ENCODE measurements at regions of chr10 and their contacts with region 1.

Region 1: GRCh38 chr10:70758757-70759514 is 26.2 kb downstream of the TBATA start:
- DNase-seq: peak; percentile 34 to 81 (median 55)
- ATAC-seq: peak; percentile 54
- H3K4me3 ChIP-seq: no peak overlapping the region
- H3K4me3 Mint-ChIP-seq: no peak overlapping the region
- H3K27ac ChIP-seq: no peak overlapping the region
- H3K27ac Mint-ChIP-seq: no peak overlapping the region
- H3K4me1 ChIP-seq: peaks cover 5% of the 10 kb centered on the region
- H3K4me1 Mint-ChIP-seq: no peaks in the 10 kb centered on the region
- H3K27me3 ChIP-seq: no peaks in the 10 kb centered on the region
- H3K27me3 Mint-ChIP-seq: no peaks in the 10 kb centered on the region
- CTCF ChIP-seq: peak; percentile 79

Region 2: DNA sequence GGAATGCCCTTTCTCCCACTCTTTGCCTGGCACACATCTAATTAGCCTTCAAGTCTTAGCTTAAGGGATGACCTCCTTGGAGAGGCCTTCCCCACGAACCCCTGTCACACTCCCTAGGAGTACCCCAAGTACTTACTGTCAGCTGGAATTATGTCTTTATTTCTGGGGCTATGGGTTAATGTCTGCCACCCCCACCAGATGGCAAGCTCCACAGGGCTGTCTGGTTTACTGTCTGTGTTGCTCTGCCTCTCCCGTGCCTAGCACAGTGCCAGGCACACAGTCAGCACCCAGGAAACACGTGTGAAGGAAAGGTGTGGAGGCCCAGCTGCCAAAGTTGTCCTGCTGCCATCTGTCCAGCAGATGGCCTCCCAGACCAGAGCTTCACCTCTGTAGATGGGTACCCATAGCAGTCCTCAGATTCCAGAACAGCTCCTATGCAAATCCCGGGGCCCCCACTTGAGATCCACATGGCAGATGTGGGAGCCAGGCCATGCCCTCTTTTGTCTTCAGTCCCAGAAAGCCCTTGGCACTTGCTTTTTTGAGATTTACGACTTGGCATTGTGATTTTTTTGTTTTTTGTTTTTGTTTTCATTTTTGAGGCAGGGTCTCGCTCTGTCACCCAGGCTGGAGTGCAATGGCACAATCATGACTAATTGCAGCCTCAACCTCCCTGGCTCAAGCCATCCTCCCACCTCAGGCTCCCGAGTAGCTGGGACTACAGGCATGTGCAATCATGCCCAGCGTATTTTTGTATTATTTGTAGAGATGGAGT is 297.5 kb before region 1 on chr10:
- CTCF ChIA-PET with region 1: interaction called, 5 read pairs
- POLR2A ChIA-PET with region 1: no interaction called
- intact Hi-C with region 1: loop called (anchors 1 kb)
- DNase-seq: peak in 13 of 14 experiments; percentile 30 to 72 (median 39)
- ATAC-seq: peak; percentile 75
- H3K4me3 ChIP-seq: no peak overlapping the region
- H3K4me3 Mint-ChIP-seq: no peak overlapping the region
- H3K27ac ChIP-seq: no peak overlapping the region
- H3K27ac Mint-ChIP-seq: no peak overlapping the region
- H3K4me1 ChIP-seq: peaks cover 12% of the 10 kb centered on the region
- H3K4me1 Mint-ChIP-seq: peaks cover 4% of the 10 kb centered on the region
- H3K27me3 ChIP-seq: peaks cover 16 to 34% of the 10 kb centered on the region in 2 experiments
- H3K27me3 Mint-ChIP-seq: peaks cover 44% of the 10 kb centered on the region
- CTCF ChIP-seq: peak; percentile 87

Region 3: GRCh38 chr10:70558871-70559810 is 199.8 kb before region 1 on chr10:
- CTCF ChIA-PET with region 1: no interaction called
- POLR2A ChIA-PET with region 1: no interaction called
- intact Hi-C with region 1: loop called in 1 of 2 experiments (anchors 1 kb)
- DNase-seq: peak; percentile 38 to 75 (median 58)
- ATAC-seq: peak; percentile 95
- H3K4me3 ChIP-seq: peak overlapping the region; percentile 52
- H3K4me3 Mint-ChIP-seq: peak overlapping the region; percentile 64
- H3K27ac ChIP-seq: no peak overlapping the region
- H3K27ac Mint-ChIP-seq: no peak overlapping the region
- H3K4me1 ChIP-seq: peaks cover 9% of the 10 kb centered on the region
- H3K4me1 Mint-ChIP-seq: peaks cover 9% of the 10 kb centered on the region
- H3K27me3 ChIP-seq: no peaks in the 10 kb centered on the region
- H3K27me3 Mint-ChIP-seq: no peaks in the 10 kb centered on the region
- CTCF ChIP-seq: peak; percentile 53

Region 4: GRCh38 chr10:70745555-70745954 is 13.4 kb before region 1 on chr10:
- CTCF ChIA-PET with region 1: no interaction called
- POLR2A ChIA-PET with region 1: no interaction called
- intact Hi-C with region 1: no loop called
- DNase-seq: no peak
- ATAC-seq: no peak
- H3K4me3 ChIP-seq: no peak overlapping the region
- H3K4me3 Mint-ChIP-seq: no peak overlapping the region
- H3K27ac ChIP-seq: no peak overlapping the region
- H3K27ac Mint-ChIP-seq: no peak overlapping the region
- H3K4me1 ChIP-seq: no peaks in the 10 kb centered on the region
- H3K4me1 Mint-ChIP-seq: no peaks in the 10 kb centered on the region
- H3K27me3 ChIP-seq: no peaks in the 10 kb centered on the region
- H3K27me3 Mint-ChIP-seq: no peaks in the 10 kb centered on the region
- CTCF ChIP-seq: no peak

Region 5: DNA sequence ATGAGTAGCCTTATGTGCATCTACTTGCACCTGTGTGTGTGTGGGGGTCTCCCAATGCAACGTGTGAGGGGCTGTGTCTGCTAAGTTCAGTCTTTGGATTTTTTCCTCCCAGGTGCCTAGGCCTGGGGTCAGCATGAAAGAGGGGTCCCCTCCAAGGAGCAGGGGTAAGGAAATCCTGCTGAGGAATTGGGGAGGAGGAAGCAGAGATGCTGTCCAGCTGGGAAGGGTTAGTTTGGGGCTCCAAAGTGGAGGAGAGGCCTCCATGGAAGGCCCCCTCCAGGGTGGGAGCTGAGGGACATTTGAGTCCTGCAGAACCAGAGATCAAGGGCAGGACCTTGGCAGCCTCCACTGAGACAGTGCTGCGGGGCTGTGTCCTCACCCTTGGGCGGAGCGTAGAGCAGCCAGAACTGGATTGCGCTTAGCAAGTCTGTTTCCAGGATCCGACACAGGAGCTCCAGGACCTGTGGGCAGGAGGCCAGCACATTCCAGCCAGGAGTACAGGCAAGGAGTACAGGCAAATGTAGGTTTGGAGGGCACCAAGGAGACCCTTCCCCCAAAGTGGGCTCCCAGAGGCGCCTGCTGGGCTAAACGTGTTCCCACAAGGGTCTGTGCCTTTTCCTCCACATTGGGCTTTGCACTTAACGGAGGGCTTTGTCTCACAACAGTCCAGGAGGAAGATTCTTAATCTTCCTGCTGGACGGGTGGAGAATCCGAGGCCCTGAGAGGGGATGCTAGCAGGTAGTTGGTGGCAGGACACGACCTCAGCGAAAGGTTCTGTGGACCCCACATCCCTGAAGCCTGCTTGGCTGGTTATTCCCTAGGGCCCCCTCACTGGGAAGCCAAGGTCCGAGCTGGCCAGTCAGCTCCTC is 16.1 kb after region 1 on chr10:
- CTCF ChIA-PET with region 1: no interaction called
- POLR2A ChIA-PET with region 1: no interaction called
- intact Hi-C with region 1: no loop called
- DNase-seq: no peak
- ATAC-seq: no peak
- H3K4me3 ChIP-seq: no peak overlapping the region
- H3K4me3 Mint-ChIP-seq: no peak overlapping the region
- H3K27ac ChIP-seq: no peak overlapping the region
- H3K27ac Mint-ChIP-seq: no peak overlapping the region
- H3K4me1 ChIP-seq: no peaks in the 10 kb centered on the region
- H3K4me1 Mint-ChIP-seq: no peaks in the 10 kb centered on the region
- H3K27me3 ChIP-seq: no peaks in the 10 kb centered on the region
- H3K27me3 Mint-ChIP-seq: no peaks in the 10 kb centered on the region
- CTCF ChIP-seq: no peak

Measured in CD4-positive, alpha-beta T cell (primary cell).